Natural killer cell (primary cell): ENCODE measurements at regions of chr10 and their contacts with region 1.

Region 1: DNA sequence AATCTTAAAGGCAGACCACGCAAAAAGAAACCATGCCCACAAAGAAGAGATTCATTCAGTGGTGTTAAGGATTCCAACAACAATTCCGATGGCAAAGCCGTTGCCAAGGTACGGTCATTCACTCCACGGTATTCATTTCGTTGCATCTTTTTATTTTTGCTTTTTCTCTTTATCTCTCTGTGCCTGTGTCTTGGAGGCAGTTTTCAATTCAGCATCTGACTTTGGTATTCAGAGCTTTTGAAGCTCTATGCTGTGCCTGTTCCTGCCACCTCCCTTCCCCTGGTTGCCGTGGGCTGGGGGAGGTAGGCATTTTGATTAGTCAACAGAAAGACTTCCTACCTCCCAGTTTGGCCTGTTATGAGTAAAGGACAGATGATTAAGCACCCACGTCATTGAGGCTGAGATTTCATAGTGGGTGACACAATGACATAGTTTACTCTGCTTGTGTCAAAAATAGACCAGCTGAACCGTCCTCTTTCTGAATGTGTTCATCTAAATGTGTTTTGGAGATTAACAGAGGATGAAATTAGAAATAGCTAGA is 149.5 kb downstream of the ARID5B start:
- DNase-seq: peak; percentile 44 to 87
- ATAC-seq: peak; percentile 68 to 83 (median 81)
- H3K4me3 ChIP-seq: no peak overlapping the region
- H3K4me3 Mint-ChIP-seq: peak overlapping the region; percentile 79
- H3K27ac ChIP-seq: peak overlapping the region; percentile 70
- H3K27ac Mint-ChIP-seq: peak overlapping the region; percentile 84 to 89
- H3K4me1 ChIP-seq: peaks cover 50% of the 10 kb centered on the region
- H3K4me1 Mint-ChIP-seq: peaks cover 83 to 98% of the 10 kb centered on the region in 2 donors
- H3K27me3 ChIP-seq: no peaks in the 10 kb centered on the region
- H3K27me3 Mint-ChIP-seq: no peaks in the 10 kb centered on the region
- CTCF ChIP-seq: no peak

Region 2: DNA sequence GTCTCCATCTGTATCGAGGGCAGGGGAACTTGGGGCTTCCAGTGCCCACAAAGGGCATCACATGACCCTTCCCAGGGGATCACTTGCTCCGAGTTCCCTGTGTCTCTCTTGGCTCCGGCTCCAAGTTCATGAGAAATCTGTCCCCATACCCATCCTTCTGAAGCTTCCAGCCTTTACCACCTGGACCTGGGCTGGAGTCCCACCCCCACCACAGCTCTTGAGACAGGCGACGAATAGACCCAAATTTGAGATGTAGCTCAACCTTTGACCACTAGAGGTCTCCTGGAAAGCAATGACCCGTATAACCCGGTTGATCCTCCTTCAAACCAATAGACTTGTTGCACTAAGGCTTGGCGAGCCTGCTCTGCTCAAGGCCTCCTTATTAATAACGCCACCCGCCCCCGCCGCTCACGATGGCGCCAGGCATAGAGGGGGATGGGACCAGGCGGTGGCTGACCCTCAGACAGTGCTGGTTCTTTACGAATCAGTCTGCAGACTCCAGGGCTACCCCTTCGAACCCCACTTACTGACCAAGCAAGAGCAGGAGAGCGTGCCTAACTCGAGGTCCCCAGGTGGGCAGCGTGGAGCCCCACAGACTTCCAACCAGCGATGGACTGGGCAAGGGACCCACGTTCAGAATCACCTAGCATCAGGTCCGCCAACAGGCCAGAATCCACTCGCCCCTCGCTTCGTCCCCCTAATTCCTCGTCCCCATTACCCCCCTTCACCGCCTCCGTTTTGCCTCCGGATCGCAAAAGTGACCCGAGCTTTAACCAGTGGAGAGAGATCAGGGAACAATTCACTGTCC is 153.9 kb before region 1 on chr10:
- intact Hi-C with region 1: loop called (anchors 2 kb)
- DNase-seq: peak; percentile 35 to 89
- ATAC-seq: peak; percentile 65 to 81 (median 77)
- H3K4me3 ChIP-seq: peak overlapping the region; percentile 13
- H3K4me3 Mint-ChIP-seq: peak overlapping the region; percentile 92
- H3K27ac ChIP-seq: no peak overlapping the region
- H3K27ac Mint-ChIP-seq: peak overlapping the region; percentile 78 to 89
- H3K4me1 ChIP-seq: peaks cover 13% of the 10 kb centered on the region
- H3K4me1 Mint-ChIP-seq: peaks cover 44 to 50% of the 10 kb centered on the region in 2 donors
- H3K27me3 ChIP-seq: no peaks in the 10 kb centered on the region
- H3K27me3 Mint-ChIP-seq: no peaks in the 10 kb centered on the region
- CTCF ChIP-seq: peak; percentile 74

Region 3: GRCh38 chr10:61992671-61993668 is 58.0 kb before region 1 on chr10:
- intact Hi-C with region 1: loop called (anchors 2 kb)
- DNase-seq: peak; percentile 43 to 84
- ATAC-seq: peak; percentile 72 to 93 (median 84)
- H3K4me3 ChIP-seq: peak overlapping the region; percentile 14
- H3K4me3 Mint-ChIP-seq: peak overlapping the region; percentile 92
- H3K27ac ChIP-seq: peak overlapping the region; percentile 87
- H3K27ac Mint-ChIP-seq: peak overlapping the region; percentile 93 to 96
- H3K4me1 ChIP-seq: peaks cover 13% of the 10 kb centered on the region
- H3K4me1 Mint-ChIP-seq: peaks cover 50 to 57% of the 10 kb centered on the region in 2 donors
- H3K27me3 ChIP-seq: no peaks in the 10 kb centered on the region
- H3K27me3 Mint-ChIP-seq: no peaks in the 10 kb centered on the region
- CTCF ChIP-seq: no peak

Region 4: GRCh38 chr10:62109587-62110293 is 58.8 kb after region 1 on chr10:
- intact Hi-C with region 1: no loop called
- DNase-seq: no peak
- ATAC-seq: peak in 1 of 3 donors; percentile 33
- H3K4me3 ChIP-seq: no peak overlapping the region
- H3K4me3 Mint-ChIP-seq: no peak overlapping the region
- H3K27ac ChIP-seq: peak overlapping the region; percentile 8
- H3K27ac Mint-ChIP-seq: no peak overlapping the region
- H3K4me1 ChIP-seq: peaks cover 14% of the 10 kb centered on the region
- H3K4me1 Mint-ChIP-seq: peaks cover 13 to 17% of the 10 kb centered on the region in 2 donors
- H3K27me3 ChIP-seq: no peaks in the 10 kb centered on the region
- H3K27me3 Mint-ChIP-seq: no peaks in the 10 kb centered on the region
- CTCF ChIP-seq: no peak

Region 5: DNA sequence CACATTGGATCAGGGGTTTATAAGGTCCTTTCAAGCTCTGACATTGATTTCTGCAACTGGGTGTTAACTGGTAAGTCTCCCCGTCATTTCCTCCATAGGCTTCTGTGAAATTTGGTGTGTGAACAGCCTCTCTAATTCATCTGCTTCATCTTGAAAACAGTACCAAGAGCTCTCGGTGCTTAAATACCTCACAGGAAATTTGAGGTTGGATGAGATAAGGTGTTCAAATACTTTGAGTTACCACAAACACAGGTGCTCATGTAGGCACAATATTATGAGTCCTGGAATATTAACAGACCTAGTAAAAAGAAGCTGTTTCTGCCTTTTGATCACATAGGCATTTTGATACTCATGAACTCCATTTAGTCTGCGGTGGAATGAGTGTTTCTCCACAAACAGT is 132.5 kb after region 1 on chr10:
- intact Hi-C with region 1: loop called (anchors 5 kb)
- DNase-seq: peak in 1 of 2 donors; percentile 87
- ATAC-seq: peak; percentile 72 to 95 (median 90)
- H3K4me3 ChIP-seq: no peak overlapping the region
- H3K4me3 Mint-ChIP-seq: peak overlapping the region; percentile 49
- H3K27ac ChIP-seq: peak overlapping the region; percentile 21
- H3K27ac Mint-ChIP-seq: peak overlapping the region; percentile 67 to 86
- H3K4me1 ChIP-seq: peaks cover 4% of the 10 kb centered on the region
- H3K4me1 Mint-ChIP-seq: peaks cover 33 to 40% of the 10 kb centered on the region in 2 donors
- H3K27me3 ChIP-seq: no peaks in the 10 kb centered on the region
- H3K27me3 Mint-ChIP-seq: no peaks in the 10 kb centered on the region
- CTCF ChIP-seq: no peak

Region 6: GRCh38 chr10:62405137-62405536 is 354.2 kb after region 1 on chr10:
- intact Hi-C with region 1: no loop called
- DNase-seq: no peak
- ATAC-seq: no peak
- H3K4me3 ChIP-seq: no peak overlapping the region
- H3K4me3 Mint-ChIP-seq: no peak overlapping the region
- H3K27ac ChIP-seq: no peak overlapping the region
- H3K27ac Mint-ChIP-seq: no peak overlapping the region
- H3K4me1 ChIP-seq: no peaks in the 10 kb centered on the region
- H3K4me1 Mint-ChIP-seq: peaks cover 0 to 8% of the 10 kb centered on the region in 2 donors
- H3K27me3 ChIP-seq: no peaks in the 10 kb centered on the region
- H3K27me3 Mint-ChIP-seq: peaks cover 12 to 33% of the 10 kb centered on the region in 2 donors
- CTCF ChIP-seq: no peak

Region 7: DNA sequence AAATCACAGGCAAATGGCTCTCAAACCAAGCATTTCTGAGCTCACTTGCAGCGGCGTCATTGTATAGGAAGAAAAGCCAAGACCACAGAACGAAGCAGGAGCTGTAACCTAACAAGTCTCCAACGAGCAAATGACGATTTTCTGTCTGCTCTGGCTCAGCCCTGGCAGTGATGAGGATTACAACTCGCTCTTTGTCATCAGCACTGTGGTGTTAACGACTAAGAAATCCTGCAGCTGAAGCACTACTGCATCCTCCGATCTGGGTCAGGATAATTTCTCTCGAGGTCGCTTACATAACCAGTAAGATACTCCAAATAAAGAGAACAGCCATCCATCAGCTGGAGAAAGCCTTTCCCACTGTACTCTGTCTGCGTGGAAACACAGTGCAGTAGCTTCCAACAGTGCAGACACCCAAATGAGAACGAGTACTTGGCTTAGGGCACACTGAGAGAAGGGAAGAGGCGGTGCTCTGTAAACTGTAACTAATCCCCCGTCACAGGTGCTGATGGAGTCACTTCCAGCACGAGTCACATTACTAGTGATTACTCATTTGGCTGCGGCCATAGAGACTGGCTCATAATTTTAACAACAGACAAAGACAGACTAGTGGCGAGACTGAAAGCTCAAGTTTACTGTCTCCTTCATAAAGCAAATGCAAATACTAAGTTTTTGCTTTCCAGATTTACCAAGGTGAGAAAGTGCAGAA is 1218.0 kb after region 1 on chr10:
- intact Hi-C with region 1: loop called (anchors 5 kb)
- DNase-seq: peak; percentile 71 to 94
- ATAC-seq: peak; percentile 86 to 98 (median 93)
- H3K4me3 ChIP-seq: peak overlapping the region; percentile 51
- H3K4me3 Mint-ChIP-seq: peak overlapping the region; percentile 98
- H3K27ac ChIP-seq: peak overlapping the region; percentile 81
- H3K27ac Mint-ChIP-seq: peak overlapping the region; percentile 96 to 98
- H3K4me1 ChIP-seq: peaks cover 3% of the 10 kb centered on the region
- H3K4me1 Mint-ChIP-seq: peaks cover 13 to 35% of the 10 kb centered on the region in 2 donors
- H3K27me3 ChIP-seq: no peaks in the 10 kb centered on the region
- H3K27me3 Mint-ChIP-seq: no peaks in the 10 kb centered on the region
- CTCF ChIP-seq: peak; percentile 31